ENCODE measurements at regions of chr1 and their contacts with region 1.

Region 1: GRCh38 chr1:78676347-78676982 is 26.8 kb downstream of the IFI44 start:
- DNase-seq: no peak
- H3K4me3 Mint-ChIP-seq: no peak overlapping the region
- H3K27ac Mint-ChIP-seq: no peak overlapping the region
- H3K4me1 Mint-ChIP-seq: peaks cover 19% of the 10 kb centered on the region
- H3K27me3 Mint-ChIP-seq: peaks cover 8% of the 10 kb centered on the region

Region 2: GRCh38 chr1:78126506-78126905 is 550.0 kb before region 1 on chr1:
- intact Hi-C with region 1: loop called (anchors 2 kb)
- DNase-seq: no peak
- H3K4me3 Mint-ChIP-seq: no peak overlapping the region
- H3K27ac Mint-ChIP-seq: no peak overlapping the region
- H3K4me1 Mint-ChIP-seq: no peaks in the 10 kb centered on the region
- H3K27me3 Mint-ChIP-seq: no peaks in the 10 kb centered on the region

Region 3: GRCh38 chr1:78649628-78650027 is 26.8 kb before region 1 on chr1 and contains the start of gene IFI44:
- intact Hi-C with region 1: loop called (anchors 2 kb)
- DNase-seq: peak; percentile 40
- H3K4me3 Mint-ChIP-seq: peak within 1 kb of the TSS; percentile 89
- H3K27ac Mint-ChIP-seq: peak within 1 kb of the TSS; percentile 88
- H3K4me1 Mint-ChIP-seq: peaks cover 59% of the 10 kb centered on the region
- H3K27me3 Mint-ChIP-seq: no peaks in the 10 kb centered on the region
- total RNA-seq, gene IFI44: 14.4 and 16.0 TPM in 2 replicates